ENCODE measurements at regions of chr4 and their contacts with region 1.

Region 1: DNA sequence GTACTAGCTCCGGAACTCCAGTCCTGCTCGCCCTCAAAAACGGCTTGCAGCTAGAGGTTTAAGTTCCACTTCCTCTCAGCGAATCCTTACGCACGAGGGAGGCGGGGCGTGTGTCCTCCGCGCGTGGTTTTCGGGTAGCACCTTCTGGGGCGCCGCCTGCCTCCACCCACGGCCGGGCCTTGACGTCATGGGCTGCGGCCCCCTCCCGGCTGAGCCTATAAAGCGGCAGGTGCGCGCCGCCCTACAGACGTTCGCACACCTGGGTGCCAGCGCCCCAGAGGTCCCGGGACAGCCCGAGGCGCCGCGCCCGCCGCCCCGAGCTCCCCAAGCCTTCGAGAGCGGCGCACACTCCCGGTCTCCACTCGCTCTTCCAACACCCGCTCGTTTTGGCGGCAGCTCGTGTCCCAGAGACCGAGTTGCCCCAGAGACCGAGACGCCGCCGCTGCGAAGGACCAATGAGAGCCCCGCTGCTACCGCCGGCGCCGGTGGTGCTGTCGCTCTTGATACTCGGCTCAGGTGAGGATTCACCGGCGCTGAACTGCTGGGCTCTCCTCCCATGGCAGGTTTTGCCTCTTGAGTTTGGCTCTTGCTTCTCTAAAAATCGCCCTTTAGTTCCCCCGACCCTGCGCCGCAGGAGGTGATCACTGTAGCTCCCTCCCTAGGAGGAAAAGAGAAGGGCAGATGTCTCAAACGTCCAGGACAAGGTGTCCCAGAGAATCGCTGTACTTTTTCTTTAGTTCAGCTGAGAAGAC is at the start of gene AREG:
- DNase-seq: peak; percentile 85 to 88
- H3K4me3 ChIP-seq: peak within 1 kb of the TSS; percentile 82
- H3K4me3 Mint-ChIP-seq: peak within 1 kb of the TSS; percentile 86
- H3K27ac Mint-ChIP-seq: peak within 1 kb of the TSS; percentile 73
- H3K4me1 ChIP-seq: peaks cover 8% of the 10 kb centered on the region
- H3K4me1 Mint-ChIP-seq: peaks cover 6% of the 10 kb centered on the region
- H3K27me3 ChIP-seq: no peaks in the 10 kb centered on the region
- H3K27me3 Mint-ChIP-seq: no peaks in the 10 kb centered on the region
- CTCF ChIP-seq: peak; percentile 43 to 68
- total RNA-seq, gene AREG: 146 and 162 TPM in 2 replicates

Region 2: GRCh38 chr4:74479009-74479408 is 33.9 kb after region 1 on chr4:
- CTCF ChIA-PET with region 1: no interaction called
- POLR2A ChIA-PET with region 1: no interaction called
- intact Hi-C with region 1: loop called (anchors 1 kb)
- DNase-seq: peak in 1 of 2 experiments; percentile 52
- H3K4me3 ChIP-seq: no peak overlapping the region
- H3K4me3 Mint-ChIP-seq: peak overlapping the region; percentile 57
- H3K27ac Mint-ChIP-seq: peak overlapping the region; percentile 85
- H3K4me1 ChIP-seq: peaks cover 55% of the 10 kb centered on the region
- H3K4me1 Mint-ChIP-seq: peaks cover 53% of the 10 kb centered on the region
- H3K27me3 ChIP-seq: no peaks in the 10 kb centered on the region
- H3K27me3 Mint-ChIP-seq: no peaks in the 10 kb centered on the region
- CTCF ChIP-seq: no peak

Region 3: GRCh38 chr4:74490736-74491135 is 45.7 kb after region 1 on chr4:
- CTCF ChIA-PET with region 1: no interaction called
- POLR2A ChIA-PET with region 1: no interaction called
- intact Hi-C with region 1: no loop called
- DNase-seq: no peak
- H3K4me3 ChIP-seq: no peak overlapping the region
- H3K4me3 Mint-ChIP-seq: no peak overlapping the region
- H3K27ac Mint-ChIP-seq: no peak overlapping the region
- H3K4me1 ChIP-seq: no peaks in the 10 kb centered on the region; the same call in 1 of the 2 replicates
- H3K4me1 Mint-ChIP-seq: peaks cover 4% of the 10 kb centered on the region
- H3K27me3 ChIP-seq: no peaks in the 10 kb centered on the region
- H3K27me3 Mint-ChIP-seq: no peaks in the 10 kb centered on the region
- CTCF ChIP-seq: no peak

Region 4: DNA sequence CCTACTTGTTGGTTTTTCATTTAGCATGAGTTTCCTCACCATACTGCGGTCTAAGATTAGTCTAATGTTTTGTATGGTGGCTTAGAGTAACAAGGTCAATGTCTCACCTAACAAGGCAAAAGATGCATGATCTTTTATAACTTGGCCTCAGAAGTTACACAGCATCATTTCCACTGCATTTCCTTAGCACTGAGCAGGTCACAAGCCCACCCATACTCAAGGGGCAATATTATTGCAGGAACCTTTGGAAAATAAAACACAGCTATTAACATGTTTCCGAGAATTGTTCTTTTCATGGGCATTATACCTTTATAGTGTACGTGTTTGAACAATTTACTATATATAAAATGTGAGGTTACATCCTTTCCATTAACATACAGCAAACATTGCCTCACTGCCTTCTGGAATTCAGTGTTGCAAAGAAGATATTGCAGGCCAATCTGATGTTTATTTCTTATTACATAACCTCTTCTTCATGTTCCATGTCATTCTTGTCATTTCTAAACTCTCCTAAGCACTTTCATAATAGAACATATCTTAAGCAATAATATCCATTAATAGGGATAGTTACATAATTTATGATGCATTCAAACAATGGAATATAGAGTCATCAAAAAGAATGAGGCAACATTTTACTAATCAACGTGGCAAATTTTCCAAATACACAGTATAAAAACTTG is 153.7 kb after region 1 on chr4:
- CTCF ChIA-PET with region 1: no interaction called
- POLR2A ChIA-PET with region 1: no interaction called
- intact Hi-C with region 1: no loop called
- DNase-seq: no peak
- H3K4me3 ChIP-seq: no peak overlapping the region
- H3K4me3 Mint-ChIP-seq: no peak overlapping the region
- H3K27ac Mint-ChIP-seq: no peak overlapping the region
- H3K4me1 ChIP-seq: peaks cover 7% of the 10 kb centered on the region; the same call in 1 of the 2 replicates
- H3K4me1 Mint-ChIP-seq: no peaks in the 10 kb centered on the region
- H3K27me3 ChIP-seq: no peaks in the 10 kb centered on the region
- H3K27me3 Mint-ChIP-seq: no peaks in the 10 kb centered on the region
- CTCF ChIP-seq: no peak

Measured in Caco-2 (cell line).